OCI-LY7 (cell line): ENCODE measurements at regions of chr15 and their contacts with region 1.

Region 1: DNA sequence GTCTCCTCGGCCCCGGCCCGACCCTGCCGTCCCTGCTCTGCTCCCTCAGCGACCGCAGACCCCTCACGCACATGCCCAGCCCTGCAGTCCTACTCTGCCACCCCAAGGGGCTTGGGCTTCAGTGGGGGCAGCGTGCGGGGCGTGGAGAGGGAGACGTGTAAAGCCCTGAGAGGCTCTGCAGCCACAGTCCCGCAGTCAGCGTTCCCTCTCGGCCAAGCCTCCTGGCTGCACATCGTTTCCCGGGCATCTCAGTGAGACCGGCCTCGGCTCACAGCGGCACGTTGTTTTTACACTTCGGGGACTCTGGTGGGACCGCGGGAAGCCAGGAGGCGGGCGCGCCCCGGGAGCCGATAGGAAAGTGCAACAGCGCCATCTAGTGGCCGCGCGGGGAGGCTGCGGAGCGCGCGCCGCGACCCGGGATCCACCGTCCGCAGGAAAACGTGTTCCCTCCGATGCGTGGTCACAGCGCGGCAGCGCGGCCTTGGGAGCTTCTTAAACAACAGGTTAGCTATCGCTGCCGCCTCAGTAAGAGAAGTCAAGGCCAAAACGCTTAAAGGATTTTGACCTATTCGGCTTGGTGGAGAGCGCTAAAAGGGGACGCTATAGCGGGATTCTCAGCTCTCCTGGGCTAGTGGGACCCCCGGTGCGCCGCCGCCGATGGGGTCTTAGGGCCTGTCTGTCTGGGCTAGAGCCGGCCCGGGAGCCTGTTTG is 226.8 kb upstream of the IGF1R start:
- DNase-seq: peak; percentile 26
- H3K4me3 ChIP-seq: no peak overlapping the region
- H3K27ac ChIP-seq: no peak overlapping the region
- H3K4me1 ChIP-seq: no peaks in the 10 kb centered on the region
- CTCF ChIP-seq: peak; percentile 89

Region 2: DNA sequence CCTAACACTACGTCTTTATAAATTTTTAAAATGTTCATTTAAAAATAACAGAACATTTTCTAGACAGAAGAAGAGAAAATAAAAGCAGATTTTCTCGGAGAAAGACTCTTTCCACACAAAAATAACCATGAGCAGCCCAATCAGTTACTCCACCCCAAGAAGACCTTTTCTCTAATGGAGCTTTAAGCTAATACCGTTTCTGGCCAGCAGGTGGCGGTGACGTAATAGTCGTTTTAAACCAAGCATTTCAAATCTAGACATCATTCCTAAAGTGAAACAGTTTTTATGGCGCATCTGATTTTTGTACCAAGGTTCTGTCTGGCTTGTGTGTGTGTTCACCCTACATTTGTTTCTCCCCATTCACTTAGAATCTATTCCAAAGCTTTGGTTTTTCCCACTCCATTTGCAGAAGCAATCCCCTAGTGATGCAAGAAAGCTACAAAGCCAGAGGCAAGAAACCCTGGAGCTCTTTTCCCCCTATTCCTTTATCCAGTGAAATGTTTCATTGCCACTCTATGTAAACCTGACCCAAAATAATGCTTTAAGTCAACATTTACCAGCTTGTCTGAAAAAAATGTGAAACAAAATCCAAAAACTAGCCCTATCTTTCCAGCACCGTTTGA is 109.9 kb before region 1 on chr15:
- CTCF ChIA-PET with region 1: interaction called, 3 read pairs
- POLR2A ChIA-PET with region 1: no interaction called
- intact Hi-C with region 1: loop called (anchors 1 kb)
- DNase-seq: peak; percentile 69
- H3K4me3 ChIP-seq: no peak overlapping the region
- H3K27ac ChIP-seq: no peak overlapping the region
- H3K4me1 ChIP-seq: no peaks in the 10 kb centered on the region
- CTCF ChIP-seq: peak; percentile 90